HepG2 (cell line): ENCODE measurements at regions of chr4 and their contacts with region 1.

Region 1: DNA sequence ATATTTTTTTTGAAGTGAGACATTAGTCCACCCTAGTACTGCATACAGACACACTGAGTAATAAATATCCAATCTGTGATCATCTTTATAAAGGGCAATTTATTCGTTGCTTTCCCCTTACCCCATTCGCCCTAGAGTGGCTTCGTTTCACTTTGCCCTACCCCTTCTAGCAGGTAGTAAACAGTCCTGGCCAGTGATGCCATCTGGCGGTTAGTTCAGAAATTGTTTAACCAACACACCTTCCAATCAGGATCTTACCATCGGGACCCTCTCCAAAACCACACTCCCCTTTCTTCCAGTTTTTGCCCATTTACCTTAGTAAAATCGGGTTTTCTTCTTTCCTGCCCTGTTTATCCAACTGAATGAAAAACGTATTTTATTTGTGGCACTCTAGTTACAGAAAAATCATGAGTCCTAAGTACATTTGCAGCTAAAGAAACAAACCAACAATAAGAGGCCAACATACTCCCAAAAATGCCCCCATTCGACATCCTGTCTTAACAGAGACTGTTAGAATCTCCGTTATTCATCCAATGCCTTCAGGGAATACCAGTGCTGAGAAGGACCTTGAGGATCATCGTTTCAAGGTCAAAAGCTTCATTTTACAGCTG is 2.2 kb downstream of the PPA2 start:
- DNase-seq: peak; percentile 75
- ATAC-seq: peak; percentile 44
- H3K4me3 ChIP-seq: peak overlapping the region; percentile 69 to 88 (median 73)
- H3K27ac ChIP-seq: peak overlapping the region; percentile 86
- H3K4me1 ChIP-seq: peaks cover 24% of the 10 kb centered on the region
- H3K27me3 ChIP-seq: no peaks in the 10 kb centered on the region; a peak in 1 of 5 replicates
- CTCF ChIP-seq: peak; percentile 88
- EP300 ChIP-seq: no peak
- POLR2A ChIP-seq: no peak
- RAD21 ChIP-seq: peak; percentile 58; the same call in 1 of the 2 replicates

Region 2: DNA sequence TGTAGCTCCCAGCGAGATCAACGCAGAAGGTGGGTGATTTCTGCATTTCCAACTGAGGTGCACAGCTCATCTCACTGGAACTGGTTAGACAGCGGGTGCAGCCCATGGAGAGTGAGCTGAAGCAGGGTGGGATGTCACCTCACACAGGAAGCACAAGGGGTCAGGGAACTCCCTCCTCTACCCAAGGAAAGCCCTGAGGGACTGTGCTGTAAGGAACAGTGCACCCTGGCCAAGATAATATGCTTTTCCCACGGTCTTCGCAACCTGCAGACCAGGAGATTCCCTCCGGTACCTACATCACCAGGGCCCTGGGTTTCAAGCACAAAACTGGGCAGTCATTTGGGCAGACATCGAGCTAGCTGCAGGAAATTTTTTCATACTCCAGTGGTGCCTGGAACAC is 541.4 kb before region 1 on chr4:
- CTCF ChIA-PET with region 1: no interaction called
- POLR2A ChIA-PET with region 1: no interaction called
- in situ Hi-C with region 1: no loop called
- intact Hi-C with region 1: loop called (anchors 2 kb)
- DNase-seq: no peak
- ATAC-seq: peak; percentile 56
- H3K4me3 ChIP-seq: no peak overlapping the region
- H3K27ac ChIP-seq: no peak overlapping the region
- H3K4me1 ChIP-seq: peaks cover 18% of the 10 kb centered on the region
- H3K27me3 ChIP-seq: no peaks in the 10 kb centered on the region
- CTCF ChIP-seq: no peak
- EP300 ChIP-seq: no peak
- POLR2A ChIP-seq: no peak
- RAD21 ChIP-seq: no peak

Region 3: DNA sequence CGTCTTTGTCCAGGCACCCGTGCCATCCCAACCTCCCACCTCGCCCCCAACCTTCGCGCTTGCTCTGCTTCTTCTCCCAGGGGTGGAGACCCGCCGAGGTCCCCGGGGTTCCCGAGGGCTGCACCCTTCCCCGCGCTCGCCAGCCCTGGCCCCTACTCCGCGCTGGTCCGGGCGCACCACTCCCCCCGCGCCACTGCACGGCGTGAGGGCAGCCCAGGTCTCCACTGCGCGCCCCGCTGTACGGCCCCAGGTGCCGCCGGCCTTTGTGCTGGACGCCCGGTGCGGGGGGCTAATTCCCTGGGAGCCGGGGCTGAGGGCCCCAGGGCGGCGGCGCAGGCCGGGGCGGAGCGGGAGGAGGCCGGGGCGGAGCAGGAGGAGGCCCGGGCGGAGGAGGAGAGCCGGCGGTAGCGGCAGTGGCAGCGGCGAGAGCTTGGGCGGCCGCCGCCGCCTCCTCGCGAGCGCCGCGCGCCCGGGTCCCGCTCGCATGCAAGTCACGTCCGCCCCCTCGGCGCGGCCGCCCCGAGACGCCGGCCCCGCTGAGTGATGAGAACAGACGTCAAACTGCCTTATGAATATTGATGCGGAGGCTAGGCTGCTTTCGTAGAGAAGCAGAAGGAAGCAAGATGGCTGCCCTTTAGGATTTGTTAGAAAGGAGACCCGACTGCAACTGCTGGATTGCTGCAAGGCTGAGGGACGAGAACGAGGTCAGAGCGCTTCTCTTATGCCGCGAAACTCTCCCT is 325.2 kb before region 1 on chr4 and contains the start of gene TET2:
- CTCF ChIA-PET with region 1: interaction called, 53 read pairs
- POLR2A ChIA-PET with region 1: interaction called, 14 read pairs
- in situ Hi-C with region 1: loop called (anchors 5 kb)
- intact Hi-C with region 1: loop called (anchors 1 kb)
- DNase-seq: peak; percentile 61
- ATAC-seq: peak; percentile 94
- H3K4me3 ChIP-seq: peak within 1 kb of the TSS; percentile 75 to 89 (median 82)
- H3K27ac ChIP-seq: peak within 1 kb of the TSS; percentile 64
- H3K4me1 ChIP-seq: peaks cover 44% of the 10 kb centered on the region
- H3K27me3 ChIP-seq: no peaks in the 10 kb centered on the region; a peak in 2 of 5 replicates
- CTCF ChIP-seq: peak; percentile 13; the same call in 1 of the 2 replicates
- EP300 ChIP-seq: no peak
- POLR2A ChIP-seq: peak; percentile 36 to 72
- RAD21 ChIP-seq: peak; percentile 60
- total RNA-seq, gene TET2: 4.6 and 4.8 TPM in 2 replicates

Region 4: DNA sequence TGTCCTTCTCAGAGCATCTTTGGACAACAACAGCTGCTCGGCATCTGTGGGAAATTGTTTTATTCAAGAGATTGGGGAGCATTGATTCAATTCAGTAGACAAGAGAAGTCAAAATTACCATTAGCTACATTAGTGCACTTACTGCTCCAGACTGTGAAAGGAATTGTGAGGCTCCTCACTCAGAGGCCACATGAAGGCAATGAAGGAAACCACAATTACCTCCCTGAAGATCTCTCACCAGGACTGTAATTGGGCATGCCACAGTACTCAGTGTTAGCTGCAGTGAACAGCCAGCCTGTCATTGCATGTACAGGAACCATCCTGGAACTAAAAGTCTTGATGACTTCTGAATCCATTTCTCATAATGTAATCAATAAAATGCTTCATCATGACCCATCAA is 142.6 kb before region 1 on chr4:
- CTCF ChIA-PET with region 1: no interaction called
- POLR2A ChIA-PET with region 1: no interaction called
- in situ Hi-C with region 1: no loop called
- intact Hi-C with region 1: no loop called
- DNase-seq: no peak
- ATAC-seq: no peak
- H3K4me3 ChIP-seq: no peak overlapping the region
- H3K27ac ChIP-seq: no peak overlapping the region
- H3K4me1 ChIP-seq: no peaks in the 10 kb centered on the region
- H3K27me3 ChIP-seq: no peaks in the 10 kb centered on the region
- CTCF ChIP-seq: no peak
- EP300 ChIP-seq: no peak
- POLR2A ChIP-seq: no peak
- RAD21 ChIP-seq: no peak

Region 5: DNA sequence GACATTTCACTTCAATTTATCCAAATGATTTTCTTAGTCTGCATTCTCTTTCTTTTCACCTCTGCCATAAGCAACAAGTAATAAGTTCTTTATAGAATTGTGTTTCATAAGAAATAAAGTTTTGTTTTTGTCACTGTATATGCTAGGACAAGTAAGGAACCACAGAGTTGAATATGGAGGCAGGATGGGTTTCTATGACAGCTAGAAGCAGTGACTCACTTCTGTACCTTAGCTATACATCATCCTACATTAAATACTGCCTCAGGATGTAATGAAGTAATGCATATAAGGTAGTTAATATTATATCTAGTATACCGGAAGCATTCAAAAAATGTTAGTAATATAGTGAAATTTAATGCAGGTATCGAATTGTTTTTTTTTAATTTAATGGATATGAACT is 125.8 kb before region 1 on chr4:
- CTCF ChIA-PET with region 1: no interaction called
- POLR2A ChIA-PET with region 1: no interaction called
- in situ Hi-C with region 1: no loop called
- intact Hi-C with region 1: loop called (anchors 2 kb)
- DNase-seq: no peak
- ATAC-seq: peak; percentile 16; the same call in 1 of the 3 replicates
- H3K4me3 ChIP-seq: no peak overlapping the region
- H3K27ac ChIP-seq: no peak overlapping the region
- H3K4me1 ChIP-seq: peaks cover 47% of the 10 kb centered on the region
- H3K27me3 ChIP-seq: no peaks in the 10 kb centered on the region
- CTCF ChIP-seq: no peak
- EP300 ChIP-seq: no peak
- POLR2A ChIP-seq: no peak
- RAD21 ChIP-seq: no peak

Region 6: DNA sequence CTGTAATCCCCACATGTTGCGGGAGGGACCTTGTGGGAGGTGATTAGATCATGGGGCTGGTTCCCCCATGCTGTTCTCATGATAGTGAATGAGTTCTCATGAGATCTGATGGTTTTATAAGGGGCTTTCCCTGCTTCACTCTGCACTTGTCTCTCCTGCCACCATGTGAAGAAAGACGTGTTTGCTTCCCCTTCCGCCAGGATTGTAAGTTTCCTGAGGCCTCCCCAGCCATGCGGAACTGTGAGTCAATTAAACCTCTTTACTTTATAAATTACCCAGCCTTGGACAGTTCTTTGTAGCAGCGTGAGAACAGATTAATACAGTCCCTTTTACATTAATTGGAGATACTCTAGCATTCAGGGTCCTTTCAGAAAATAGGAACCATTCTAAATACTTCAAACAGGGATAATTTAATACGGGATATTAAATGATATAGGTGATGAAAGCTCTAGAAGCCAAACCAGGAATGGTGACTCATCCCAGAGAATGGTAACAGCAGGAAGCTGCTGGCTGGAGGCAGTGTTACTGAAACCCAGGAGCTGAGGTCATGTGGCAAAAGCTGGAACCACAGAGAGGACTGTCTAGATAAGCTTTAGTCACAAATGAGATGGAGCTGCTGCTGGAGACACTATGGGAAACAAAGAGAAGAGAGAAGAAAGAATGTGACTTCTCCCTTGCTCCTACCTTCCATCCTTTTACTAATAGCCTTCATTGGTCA is 294.2 kb after region 1 on chr4:
- CTCF ChIA-PET with region 1: no interaction called
- POLR2A ChIA-PET with region 1: no interaction called
- in situ Hi-C with region 1: no loop called
- intact Hi-C with region 1: no loop called
- DNase-seq: peak; percentile 8
- ATAC-seq: no peak
- H3K4me3 ChIP-seq: no peak overlapping the region
- H3K27ac ChIP-seq: no peak overlapping the region
- H3K4me1 ChIP-seq: no peaks in the 10 kb centered on the region
- H3K27me3 ChIP-seq: no peaks in the 10 kb centered on the region
- CTCF ChIP-seq: no peak
- EP300 ChIP-seq: no peak
- POLR2A ChIP-seq: no peak
- RAD21 ChIP-seq: no peak